GM13977 (cell line): ENCODE measurements at regions of chr20 and their contacts with region 1.

Region 1: DNA sequence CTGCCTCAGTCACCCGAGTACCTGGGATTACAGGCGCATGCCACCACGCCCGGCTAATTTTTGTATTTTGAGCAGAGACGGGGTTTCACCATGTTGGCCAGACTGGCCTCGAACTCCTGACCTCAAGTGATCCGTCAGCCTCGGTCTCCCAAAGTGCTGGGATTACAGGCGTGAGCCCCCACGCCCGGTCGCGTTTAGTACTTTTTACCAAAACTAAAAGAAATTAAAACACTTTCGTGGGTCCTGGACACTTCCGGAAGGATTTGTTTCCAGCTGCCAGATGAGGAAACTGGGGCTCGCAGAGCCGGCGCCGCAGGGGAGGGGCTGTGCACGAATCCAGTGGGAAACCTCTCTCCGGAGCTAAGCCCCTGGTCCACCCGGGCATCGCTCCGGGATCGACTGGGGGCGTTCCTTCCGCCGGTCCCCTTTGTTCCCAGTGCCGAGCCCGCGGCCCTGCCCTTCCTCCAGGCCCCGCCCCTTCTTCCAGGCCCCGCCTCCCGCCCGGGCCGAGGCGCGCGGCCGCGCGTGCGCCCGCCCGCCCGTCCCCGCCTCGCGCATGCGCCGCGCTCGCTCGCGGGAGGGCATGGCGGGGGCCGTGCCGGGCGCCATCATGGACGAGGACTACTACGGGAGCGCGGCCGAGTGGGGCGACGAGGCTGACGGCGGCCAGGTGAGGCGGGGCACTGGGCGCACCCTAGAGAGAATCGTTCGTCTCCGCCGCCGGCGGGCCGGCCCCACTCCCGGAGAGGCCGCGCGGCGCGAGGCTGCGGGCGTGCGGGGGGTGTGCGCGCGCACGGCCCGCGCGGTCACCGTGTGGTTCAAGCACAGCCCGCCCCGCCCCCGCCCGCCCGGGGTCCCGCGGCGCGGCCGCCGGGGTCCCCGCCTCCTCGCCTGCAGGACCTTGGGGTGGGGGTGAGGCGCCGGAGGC is at the start of gene NELFCD:
- DNase-seq: peak; percentile 99
- CTCF ChIP-seq: no peak

Region 2: DNA sequence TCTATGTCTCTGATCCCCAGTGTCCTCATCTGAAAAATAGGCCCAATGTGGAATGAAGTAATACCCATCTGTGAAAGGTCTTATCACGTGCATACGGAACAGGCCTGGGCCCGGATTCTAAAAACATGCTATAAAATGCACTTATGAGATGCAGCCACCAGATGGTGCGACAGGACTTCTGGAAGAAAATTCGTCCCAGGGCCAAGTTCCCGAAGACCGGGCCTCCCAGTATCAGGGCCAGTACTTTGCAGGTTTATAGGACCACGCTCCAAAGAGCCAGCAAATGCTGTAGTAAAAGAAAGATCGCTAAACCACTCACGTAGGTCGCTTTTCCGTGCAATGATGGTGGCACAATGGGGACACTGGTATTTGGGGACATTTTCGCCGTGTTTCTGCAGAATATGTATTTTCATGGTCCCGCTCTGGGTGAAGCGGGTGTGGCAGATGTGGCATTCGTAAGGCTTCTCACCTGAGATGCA is 1466.7 kb before region 1 on chr20:
- in situ Hi-C with region 1: no loop called
- DNase-seq: peak; percentile 61
- CTCF ChIP-seq: peak; percentile 70

Region 3: DNA sequence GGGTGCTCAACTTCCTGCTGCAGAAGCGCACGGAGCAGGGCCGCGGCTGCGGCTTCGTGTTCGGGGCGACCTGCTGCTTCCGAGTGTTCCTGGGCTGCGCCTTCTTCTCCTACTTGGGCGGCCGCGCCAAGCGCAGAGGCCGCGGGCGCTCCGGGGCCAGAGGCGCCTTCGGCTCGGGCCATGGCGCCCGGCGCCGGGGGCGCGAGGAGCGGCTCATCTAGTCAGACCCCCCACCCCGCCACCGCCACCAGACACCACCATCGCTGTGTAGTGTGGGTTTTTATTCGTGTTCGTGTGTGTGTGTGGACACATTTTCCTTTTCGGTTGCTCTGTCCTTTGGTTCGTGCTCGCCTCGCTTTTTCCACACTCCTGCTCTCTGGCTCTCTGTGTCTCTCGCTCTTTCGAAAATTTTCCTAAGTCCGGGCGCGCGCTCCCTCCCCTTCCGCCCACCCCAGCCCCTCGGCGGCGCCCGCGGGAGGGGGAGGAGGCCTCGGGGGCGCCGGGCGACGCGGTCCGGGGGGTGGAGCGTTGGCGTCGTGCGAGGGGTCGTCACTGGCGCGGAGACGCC is 90.4 kb before region 1 on chr20:
- in situ Hi-C with region 1: loop called (anchors 10 kb)
- DNase-seq: peak; percentile 64
- CTCF ChIP-seq: no peak

Region 4: GRCh38 chr20:58911970-58912369 is 69.0 kb before region 1 on chr20:
- in situ Hi-C with region 1: loop called (anchors 10 kb)
- DNase-seq: no peak
- CTCF ChIP-seq: no peak